CD8-positive, alpha-beta T cell (primary cell): ENCODE measurements at regions of chrX and their contacts with region 1.

Region 1: GRCh38 chrX:69387567-69388487 is 116.3 kb upstream of the NALF2 start:
- DNase-seq: peak in 6 of 9 experiments; percentile 0 to 52 (median 30)
- ATAC-seq: no peak
- H3K4me3 ChIP-seq: no peak overlapping the region
- H3K4me3 Mint-ChIP-seq: no peak overlapping the region
- H3K27ac ChIP-seq: no peak overlapping the region
- H3K27ac Mint-ChIP-seq: no peak overlapping the region
- H3K4me1 ChIP-seq: no peaks in the 10 kb centered on the region
- H3K4me1 Mint-ChIP-seq: no peaks in the 10 kb centered on the region
- H3K27me3 ChIP-seq: no peaks in the 10 kb centered on the region
- H3K27me3 Mint-ChIP-seq: peaks cover 6% of the 10 kb centered on the region
- CTCF ChIP-seq: no peak

Region 2: GRCh38 chrX:68732906-68733493 is 654.8 kb before region 1 on chrX:
- CTCF ChIA-PET with region 1: no interaction called
- POLR2A ChIA-PET with region 1: no interaction called
- intact Hi-C with region 1: loop called in 1 of 2 experiments (anchors 10 kb)
- DNase-seq: peak; percentile 14 to 70 (median 48)
- ATAC-seq: no peak
- H3K4me3 ChIP-seq: no peak overlapping the region
- H3K4me3 Mint-ChIP-seq: no peak overlapping the region
- H3K27ac ChIP-seq: no peak overlapping the region
- H3K27ac Mint-ChIP-seq: no peak overlapping the region
- H3K4me1 ChIP-seq: no peaks in the 10 kb centered on the region
- H3K4me1 Mint-ChIP-seq: no peaks in the 10 kb centered on the region
- H3K27me3 ChIP-seq: no peaks in the 10 kb centered on the region
- H3K27me3 Mint-ChIP-seq: peaks cover 11% of the 10 kb centered on the region
- CTCF ChIP-seq: peak; percentile 27

Region 3: DNA sequence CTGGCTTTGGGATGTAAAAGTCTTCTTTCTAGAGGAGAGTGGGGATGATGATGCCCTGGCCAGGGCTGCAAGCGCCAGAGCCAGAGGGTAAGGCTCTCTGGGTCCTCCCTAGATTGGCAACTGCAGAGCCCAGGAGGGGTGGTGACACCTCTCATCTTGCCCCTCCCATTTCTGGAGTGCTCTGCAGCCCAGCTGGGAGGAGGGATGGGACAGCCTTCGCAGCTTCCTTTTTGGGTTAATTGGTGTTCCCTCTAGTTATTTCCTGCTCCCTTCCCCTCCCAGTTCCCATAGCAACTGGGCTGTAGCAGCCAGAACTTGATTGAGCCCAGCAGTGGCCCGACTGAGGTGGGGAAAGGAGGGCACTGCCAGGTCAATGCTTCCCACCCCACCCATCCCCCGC is 135.5 kb after region 1 on chrX:
- CTCF ChIA-PET with region 1: no interaction called
- POLR2A ChIA-PET with region 1: no interaction called
- intact Hi-C with region 1: loop called in 1 of 2 experiments (anchors 5 kb)
- DNase-seq: no peak
- ATAC-seq: no peak
- H3K4me3 ChIP-seq: no peak overlapping the region
- H3K4me3 Mint-ChIP-seq: no peak overlapping the region
- H3K27ac ChIP-seq: no peak overlapping the region
- H3K27ac Mint-ChIP-seq: no peak overlapping the region
- H3K4me1 ChIP-seq: no peaks in the 10 kb centered on the region
- H3K4me1 Mint-ChIP-seq: no peaks in the 10 kb centered on the region
- H3K27me3 ChIP-seq: no peaks in the 10 kb centered on the region
- H3K27me3 Mint-ChIP-seq: peaks cover 22% of the 10 kb centered on the region
- CTCF ChIP-seq: no peak